Activated CD4-positive, alpha-beta T cell treated with anti-CD3 and anti-CD28 coated beads for 36 hours (primary cell): ENCODE measurements at regions of chr10 and their contacts with region 1.

Region 1: GRCh38 chr10:129896136-129896859 is 67.8 kb downstream of the EBF3 start:
- DNase-seq: no peak
- ATAC-seq: no peak
- H3K4me3 Mint-ChIP-seq: no peak overlapping the region
- H3K27ac Mint-ChIP-seq: no peak overlapping the region
- H3K4me1 Mint-ChIP-seq: no peaks in the 10 kb centered on the region
- H3K27me3 Mint-ChIP-seq: peaks cover 19% of the 10 kb centered on the region

Region 2: GRCh38 chr10:129605986-129606518 is 290.2 kb before region 1 on chr10:
- CTCF ChIA-PET with region 1: no interaction called
- POLR2A ChIA-PET with region 1: no interaction called
- intact Hi-C with region 1: no loop called
- DNase-seq: no peak
- ATAC-seq: no peak
- H3K4me3 Mint-ChIP-seq: no peak overlapping the region
- H3K27ac Mint-ChIP-seq: no peak overlapping the region
- H3K4me1 Mint-ChIP-seq: no peaks in the 10 kb centered on the region
- H3K27me3 Mint-ChIP-seq: no peaks in the 10 kb centered on the region

Region 3: GRCh38 chr10:129718548-129719414 is 177.5 kb before region 1 on chr10:
- CTCF ChIA-PET with region 1: no interaction called
- POLR2A ChIA-PET with region 1: no interaction called
- intact Hi-C with region 1: no loop called
- DNase-seq: no peak
- ATAC-seq: no peak
- H3K4me3 Mint-ChIP-seq: no peak overlapping the region
- H3K27ac Mint-ChIP-seq: no peak overlapping the region
- H3K4me1 Mint-ChIP-seq: no peaks in the 10 kb centered on the region
- H3K27me3 Mint-ChIP-seq: no peaks in the 10 kb centered on the region

Region 4: DNA sequence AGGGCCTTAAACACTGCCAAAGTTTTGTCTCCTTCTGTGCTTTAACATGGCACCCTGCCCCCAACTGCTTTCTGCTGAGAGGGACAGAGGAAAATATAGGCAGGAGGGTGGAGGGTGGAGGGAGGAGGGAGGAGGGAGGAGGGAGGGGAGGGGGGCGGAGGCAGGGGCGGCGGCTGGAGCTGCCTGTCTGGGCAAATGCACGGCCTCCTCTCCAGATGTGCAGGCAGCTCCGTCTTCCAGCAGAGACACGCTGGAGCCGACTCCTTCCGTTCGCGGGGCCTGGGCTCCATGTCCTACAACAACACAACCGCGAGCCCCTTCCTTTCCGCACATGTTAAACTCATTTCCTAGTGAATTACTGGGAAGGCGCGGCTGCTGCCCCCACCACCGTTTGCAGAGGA is 53.6 kb after region 1 on chr10:
- CTCF ChIA-PET with region 1: no interaction called
- POLR2A ChIA-PET with region 1: no interaction called
- intact Hi-C with region 1: loop called in 1 of 2 experiments (anchors 5 kb)
- DNase-seq: no peak
- ATAC-seq: no peak
- H3K4me3 Mint-ChIP-seq: no peak overlapping the region
- H3K27ac Mint-ChIP-seq: no peak overlapping the region
- H3K4me1 Mint-ChIP-seq: no peaks in the 10 kb centered on the region
- H3K27me3 Mint-ChIP-seq: peaks cover 19% of the 10 kb centered on the region